Gastrocnemius medialis (tissue), 4 donors: ENCODE measurements at regions of chr17 and their contacts with region 1.

Region 1: DNA sequence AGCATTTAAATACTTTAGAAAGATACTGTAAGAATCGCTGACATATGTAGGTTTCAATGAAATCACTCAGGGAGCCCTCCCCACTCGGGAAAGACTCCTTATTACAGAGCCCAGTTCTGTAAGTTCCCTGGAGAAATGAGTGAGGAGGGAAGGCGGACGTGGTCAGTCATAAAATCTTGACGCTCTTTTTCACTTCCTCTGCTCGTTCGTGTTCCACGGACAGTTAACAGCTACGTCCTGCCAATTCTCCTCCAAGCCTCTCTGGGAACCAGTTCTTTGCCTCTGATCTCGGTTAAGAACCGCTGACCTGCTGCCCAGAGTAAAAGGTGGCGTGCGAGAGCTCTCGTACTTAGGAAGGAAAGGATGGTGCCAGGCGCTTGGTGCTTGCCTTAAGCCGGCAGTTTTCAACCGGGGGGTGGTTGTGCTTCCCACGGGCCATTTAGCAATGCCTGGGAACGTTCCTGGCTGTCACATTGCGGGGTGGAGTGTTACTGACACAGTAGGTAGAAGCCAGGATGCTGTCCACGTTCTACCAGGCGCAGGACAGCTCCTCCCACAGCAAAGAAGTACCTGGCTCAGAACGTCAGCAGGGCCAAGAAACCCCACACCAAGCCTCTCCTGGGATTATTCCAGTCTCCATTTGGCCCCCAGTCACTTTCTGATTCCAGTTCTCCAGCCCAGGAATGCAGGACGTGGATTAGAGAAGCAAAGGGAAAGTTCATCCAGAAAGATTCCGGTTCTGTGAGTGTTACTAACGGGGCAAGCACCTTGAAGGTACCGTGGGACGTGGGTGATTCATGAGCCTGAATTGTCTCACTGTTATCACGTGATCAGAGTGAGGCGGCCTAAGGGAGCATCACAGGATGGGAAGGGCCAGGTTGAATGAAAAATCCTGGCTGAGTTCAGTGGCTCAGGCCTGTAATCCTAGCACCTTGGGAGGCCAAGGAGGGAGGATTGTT is 87.7 kb downstream of the MRM3 start:
- DNase-seq: peak; percentile 90 to 97
- ATAC-seq: peak; percentile 78
- H3K4me3 ChIP-seq: peak overlapping the region; percentile 24 to 55 (median 42)
- H3K27ac ChIP-seq: peak overlapping the region; percentile 92 to 99 (median 96)
- H3K4me1 ChIP-seq: peaks cover 35 to 38% of the 10 kb centered on the region in 2 donors
- H3K27me3 ChIP-seq: no peaks in the 10 kb centered on the region
- CTCF ChIP-seq: peak in 2 of 5 experiments; percentile 11
- POLR2A ChIP-seq: peak; percentile 69 to 75

Region 2: DNA sequence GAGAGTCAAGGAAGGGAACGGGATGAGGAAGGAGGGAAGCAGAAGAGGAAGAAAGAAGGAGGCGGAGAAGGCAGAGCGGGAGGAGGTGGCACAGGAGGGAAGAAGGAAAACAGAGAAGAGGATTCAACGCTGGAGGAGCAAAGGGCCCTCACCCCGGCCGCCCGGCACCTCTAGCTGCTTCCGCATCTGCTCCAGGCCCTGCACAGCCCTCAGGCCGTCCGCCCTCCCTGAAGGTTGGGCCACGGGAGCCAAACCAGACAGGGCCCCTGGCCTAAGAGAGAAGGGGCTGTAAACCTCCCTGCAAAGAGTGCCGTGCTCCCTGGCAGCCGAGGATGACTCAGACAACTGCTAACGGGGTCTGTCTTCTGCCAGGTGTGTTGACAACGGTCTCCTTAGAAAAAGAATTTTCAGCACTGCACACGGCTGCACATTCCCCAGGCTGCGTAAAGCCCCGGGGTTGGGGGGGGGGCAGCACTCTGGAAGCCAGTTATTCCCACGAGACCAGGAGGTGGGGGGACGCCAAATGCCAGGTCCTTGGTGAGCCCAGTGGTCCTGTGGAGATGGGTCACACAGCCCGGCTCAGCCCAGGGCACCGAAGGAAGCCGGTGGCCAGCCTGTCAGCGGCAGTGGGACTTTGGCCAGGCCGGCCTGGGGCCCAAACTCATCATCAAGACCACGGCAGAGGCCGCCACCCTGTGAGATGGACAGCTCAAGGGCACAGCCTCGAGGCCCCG is 58.6 kb before region 1 on chr17:
- in situ Hi-C with region 1: no loop called
- intact Hi-C with region 1: loop called (anchors 1 kb)
- DNase-seq: no peak
- ATAC-seq: no peak
- H3K4me3 ChIP-seq: no peak overlapping the region
- H3K27ac ChIP-seq: no peak overlapping the region
- H3K4me1 ChIP-seq: peaks cover 5 to 9% of the 10 kb centered on the region in 2 donors
- H3K27me3 ChIP-seq: no peaks in the 10 kb centered on the region
- CTCF ChIP-seq: no peak
- POLR2A ChIP-seq: no peak

Region 3: GRCh38 chr17:921161-921560 is 51.3 kb after region 1 on chr17:
- in situ Hi-C with region 1: no loop called
- intact Hi-C with region 1: no loop called
- DNase-seq: peak; percentile 18 to 41
- ATAC-seq: peak; percentile 40 to 48
- H3K4me3 ChIP-seq: no peak overlapping the region
- H3K27ac ChIP-seq: no peak overlapping the region
- H3K4me1 ChIP-seq: peaks cover 4 to 6% of the 10 kb centered on the region in 2 donors
- H3K27me3 ChIP-seq: no peaks in the 10 kb centered on the region
- CTCF ChIP-seq: no peak
- POLR2A ChIP-seq: no peak